Testis (tissue), 5 donors: ENCODE measurements at regions of chr5 and their contacts with region 1.

Region 1: DNA sequence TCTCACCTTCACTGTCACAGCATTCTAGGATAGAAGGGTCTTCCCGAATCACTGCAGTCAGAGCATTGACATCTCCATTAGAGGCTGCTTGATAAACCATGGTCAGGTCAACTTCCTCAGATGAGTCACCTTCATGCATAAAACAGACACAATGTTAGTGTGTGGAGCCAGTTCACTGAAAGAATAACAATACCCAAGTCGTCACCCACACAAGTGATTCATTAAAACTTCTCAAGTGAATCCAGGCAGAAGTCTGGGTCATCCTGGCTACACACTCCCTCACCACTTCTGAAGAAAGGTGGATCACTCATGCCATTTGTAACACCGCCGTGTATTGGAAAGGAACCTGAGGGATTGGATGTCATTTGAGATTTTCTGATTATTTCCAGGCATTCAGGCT is 49.6 kb downstream of the ANKRD55 start:
- DNase-seq: no peak
- H3K4me3 ChIP-seq: no peak overlapping the region
- H3K27ac ChIP-seq: no peak overlapping the region
- H3K4me1 ChIP-seq: no peaks in the 10 kb centered on the region
- H3K27me3 ChIP-seq: no peaks in the 10 kb centered on the region
- CTCF ChIP-seq: no peak
- POLR2A ChIP-seq: no peak

Region 2: DNA sequence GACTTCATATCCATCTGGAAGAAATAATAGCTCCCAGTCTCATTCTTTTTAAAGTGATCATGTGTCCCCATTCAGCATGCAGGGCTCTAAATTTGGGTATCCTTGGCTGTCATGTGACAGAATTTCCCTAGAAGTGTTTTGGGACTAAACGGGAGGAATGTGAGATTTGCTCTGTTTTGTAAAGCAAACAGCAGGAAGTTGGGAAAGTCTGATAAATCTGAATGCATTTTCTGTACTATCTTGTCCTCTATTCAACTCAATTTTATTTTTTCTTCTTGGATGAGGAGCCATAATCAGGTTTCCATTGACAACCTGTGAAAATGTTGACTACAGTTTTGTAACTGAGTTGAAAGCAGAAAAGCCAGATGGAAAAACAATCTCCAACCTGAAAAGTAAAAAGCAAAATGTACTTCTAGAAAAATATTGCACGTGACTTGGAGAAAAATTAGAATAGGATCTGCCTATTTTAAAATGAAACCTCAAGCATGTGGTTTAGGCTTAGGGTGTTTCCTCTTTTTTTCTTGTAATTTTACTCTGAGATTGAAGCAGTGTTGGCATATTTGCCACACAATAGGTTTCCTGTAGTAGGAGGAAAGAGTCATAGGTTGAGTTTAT is 112.5 kb before region 1 on chr5:
- intact Hi-C with region 1: loop called (anchors 10 kb)
- DNase-seq: no peak
- H3K4me3 ChIP-seq: no peak overlapping the region
- H3K27ac ChIP-seq: peak overlapping the region in 1 of 2 donors; percentile 72
- H3K4me1 ChIP-seq: peaks cover 7% of the 10 kb centered on the region
- H3K27me3 ChIP-seq: no peaks in the 10 kb centered on the region
- CTCF ChIP-seq: no peak
- POLR2A ChIP-seq: no peak

Region 3: DNA sequence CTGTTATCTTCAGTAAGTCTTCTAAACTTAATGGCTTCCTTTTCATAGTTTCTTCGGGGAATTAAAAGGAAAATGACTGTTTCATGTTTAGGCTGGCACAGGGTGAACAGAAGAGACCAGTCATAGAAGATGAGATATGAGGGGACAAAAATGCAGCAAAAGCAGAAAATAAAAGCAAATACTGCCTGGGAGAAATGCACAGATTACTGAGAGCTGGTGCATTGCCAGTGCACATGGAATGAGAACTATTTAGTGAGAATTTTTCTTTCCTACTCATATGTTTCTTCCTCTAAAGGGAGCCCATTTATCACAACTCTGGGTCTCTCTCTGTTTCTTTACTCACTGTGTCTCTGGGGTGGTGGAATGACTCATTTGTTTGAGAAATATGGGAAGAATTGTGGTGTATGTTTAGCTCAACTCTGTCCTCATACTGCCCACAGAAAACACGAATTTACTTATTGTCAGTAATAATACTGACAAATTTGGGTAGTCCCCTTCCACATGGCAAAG is 75.6 kb after region 1 on chr5:
- intact Hi-C with region 1: no loop called
- DNase-seq: no peak
- H3K4me3 ChIP-seq: no peak overlapping the region
- H3K27ac ChIP-seq: no peak overlapping the region
- H3K4me1 ChIP-seq: peaks cover 8% of the 10 kb centered on the region
- H3K27me3 ChIP-seq: no peaks in the 10 kb centered on the region
- CTCF ChIP-seq: no peak
- POLR2A ChIP-seq: no peak